Posterior vena cava (tissue), 2 donors: ENCODE measurements at regions of chr1 and their contacts with region 1.

Region 1: DNA sequence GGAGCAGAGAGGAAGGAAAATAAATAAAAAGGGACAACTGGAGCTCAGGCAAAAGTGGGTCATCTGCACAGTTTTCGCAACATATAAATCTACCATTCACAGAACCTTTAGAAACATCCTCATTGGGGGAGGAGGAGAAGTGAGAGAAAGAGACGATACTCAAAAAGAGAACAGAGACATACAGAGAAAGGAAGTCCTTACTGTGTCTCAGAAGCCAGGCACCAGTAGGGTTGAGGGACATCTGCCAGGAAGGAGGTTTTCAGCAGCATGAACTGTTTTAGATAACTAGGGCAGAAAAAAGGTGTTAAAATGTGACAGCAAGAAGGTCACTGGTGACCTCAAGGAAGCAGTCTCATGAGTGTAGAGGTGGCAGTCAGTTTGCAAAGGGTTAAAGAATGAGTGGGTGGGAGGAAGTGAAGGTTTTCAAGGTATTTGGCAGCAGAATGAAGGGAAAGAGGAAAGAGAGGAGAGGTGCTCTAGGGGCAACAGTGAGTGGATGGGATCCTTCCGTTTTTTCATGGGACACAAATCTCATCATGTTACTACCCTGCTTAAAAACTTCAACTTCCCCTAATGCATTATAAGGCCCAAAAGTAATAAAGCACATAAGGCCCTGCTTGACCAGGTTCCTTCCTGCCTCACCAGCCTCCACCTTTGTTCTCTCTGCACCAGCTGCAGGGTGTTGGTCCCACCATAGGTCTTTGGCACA is 9.5 kb downstream of the JAK1 start:
- DNase-seq: no peak

Region 2: DNA sequence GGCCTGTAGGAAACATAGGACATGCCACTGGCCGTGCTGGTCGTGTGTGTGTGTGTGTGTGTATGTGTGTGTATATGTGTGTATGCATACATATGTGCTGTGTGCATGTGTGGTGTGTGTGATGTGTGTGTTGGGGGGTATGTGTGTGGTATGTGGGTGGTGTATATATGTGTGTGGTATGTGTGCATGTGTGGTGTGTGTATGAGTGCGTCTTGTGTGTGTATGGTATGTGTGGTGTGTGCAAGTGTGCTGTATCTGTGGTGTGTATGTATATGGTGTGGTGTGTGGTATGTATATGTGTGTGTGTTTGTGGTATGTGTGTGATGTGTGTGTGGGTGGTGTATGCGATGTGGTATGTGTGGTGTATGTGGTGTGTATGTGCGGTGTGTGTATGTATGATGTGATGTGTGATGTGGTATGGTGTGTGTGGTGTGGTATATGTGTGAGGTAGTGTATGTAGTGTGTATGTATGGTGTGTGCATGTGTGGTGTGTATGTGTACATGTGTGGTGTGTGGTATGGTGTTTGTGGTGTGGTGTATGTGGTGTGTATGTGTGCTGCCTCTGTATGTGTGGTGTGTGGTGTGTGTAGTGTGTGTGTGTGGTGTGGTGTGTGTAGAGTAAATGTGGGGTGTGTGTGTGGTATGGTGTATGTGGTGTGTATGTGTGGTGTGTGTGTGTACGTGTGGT is 607.8 kb before region 1 on chr1:
- intact Hi-C with region 1: no loop called
- DNase-seq: no peak

Region 3: DNA sequence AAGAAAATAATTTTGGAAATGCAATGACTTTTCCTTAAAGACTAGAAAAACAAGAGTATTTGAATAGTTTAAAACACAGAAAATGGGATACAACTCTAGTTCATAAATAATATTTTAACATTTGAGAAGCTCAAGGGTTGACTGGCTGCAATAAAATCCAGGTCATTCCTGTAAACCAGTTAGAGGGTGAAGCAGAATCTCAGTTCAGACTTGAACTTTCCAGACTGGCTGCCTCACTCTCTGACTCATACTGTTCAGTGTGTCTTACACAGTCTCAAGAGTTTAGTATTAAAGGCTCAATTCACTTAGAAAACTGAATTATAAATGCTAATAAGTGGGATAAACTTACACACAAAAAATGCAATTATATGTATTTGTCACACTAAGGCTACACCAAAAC is 122.2 kb before region 1 on chr1:
- intact Hi-C with region 1: loop called in 1 of 2 experiments (anchors 5 kb)
- DNase-seq: no peak

Region 4: DNA sequence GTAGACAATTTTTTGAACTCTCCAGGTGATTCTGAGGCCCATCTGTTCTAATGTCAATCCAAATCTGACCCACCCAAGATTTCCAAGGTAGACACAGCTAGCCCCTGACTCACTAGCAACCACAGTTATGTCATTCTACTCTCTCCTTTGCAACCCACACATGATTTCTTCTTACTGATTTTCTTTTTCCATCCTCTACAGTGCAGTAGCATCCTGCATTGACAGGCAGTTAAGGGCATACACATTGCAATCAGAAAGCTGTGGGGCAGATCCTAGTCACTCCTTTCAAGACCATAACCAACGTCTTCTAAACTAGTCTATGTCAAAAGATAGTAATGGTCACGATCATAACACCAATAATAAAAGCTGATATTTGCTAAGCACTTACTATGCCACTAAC is 44.7 kb before region 1 on chr1:
- intact Hi-C with region 1: loop called in 1 of 2 experiments (anchors 1 kb)
- DNase-seq: no peak

Region 5: DNA sequence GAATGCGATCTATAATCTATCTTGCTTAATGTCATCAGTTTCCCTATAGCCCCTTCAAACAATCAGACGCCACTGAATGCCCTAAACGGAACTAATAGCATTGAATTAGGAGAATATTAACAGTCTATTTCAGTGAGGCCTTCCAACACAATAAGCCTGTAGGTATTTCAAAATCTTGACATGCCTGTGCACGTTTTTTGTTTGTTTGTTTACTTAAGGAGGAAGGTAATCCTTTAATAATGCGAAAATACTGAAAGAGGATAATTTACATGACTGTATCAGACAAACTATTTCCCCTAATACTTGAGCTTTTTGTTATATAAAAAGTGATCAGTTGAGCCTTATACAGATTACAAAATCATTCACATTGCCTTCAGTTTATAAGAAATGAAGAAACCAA is 38.4 kb after region 1 on chr1:
- intact Hi-C with region 1: loop called in 1 of 2 experiments (anchors 5 kb)
- DNase-seq: no peak

Region 6: DNA sequence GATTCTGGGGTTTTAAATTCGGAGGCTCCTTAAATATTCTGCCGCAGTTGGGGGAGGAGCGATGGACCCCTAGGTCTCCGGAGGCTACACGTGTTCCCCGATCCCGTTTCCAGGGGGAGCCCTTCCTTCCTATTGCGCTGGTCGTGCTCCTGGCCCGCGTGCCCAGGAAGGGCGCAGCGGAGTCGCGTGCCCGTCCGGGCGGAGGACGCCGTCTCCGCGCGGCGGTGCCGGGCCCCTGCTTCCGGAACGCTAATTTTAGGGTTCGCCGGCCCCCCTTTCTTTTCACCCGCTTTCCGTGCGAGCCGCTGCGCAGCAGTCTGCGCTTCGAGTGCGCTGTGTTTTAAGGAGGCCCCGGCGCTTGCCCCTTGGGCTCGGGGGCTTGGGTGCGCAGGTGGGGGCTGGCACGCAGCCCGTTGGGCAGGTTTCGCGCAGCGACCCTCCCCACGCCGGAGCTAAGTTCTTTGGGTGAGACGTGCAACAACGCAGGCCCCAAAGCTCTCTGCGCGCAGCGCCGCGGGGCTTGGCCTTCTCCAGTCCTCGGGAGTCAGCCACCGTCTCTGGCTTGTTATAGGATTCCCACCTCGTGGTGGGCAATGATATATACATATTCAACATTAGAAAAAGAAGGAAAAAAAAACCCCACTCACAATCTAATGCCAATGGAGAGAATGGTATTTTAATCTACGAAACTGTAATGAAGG is 308.9 kb after region 1 on chr1:
- intact Hi-C with region 1: no loop called
- DNase-seq: no peak